Colonic mucosa (tissue), 4 donors: ENCODE measurements at regions of chr6 and their contacts with region 1.

Region 1: GRCh38 chr6:25717866-25718740 is 36.4 kb upstream of the SLC17A4 start:
- DNase-seq: no peak
- H3K4me3 ChIP-seq: no peak overlapping the region
- H3K27ac ChIP-seq: no peak overlapping the region
- H3K4me1 ChIP-seq: no peaks in the 10 kb centered on the region
- H3K27me3 ChIP-seq: no peaks in the 10 kb centered on the region
- CTCF ChIP-seq: peak; percentile 32

Region 2: GRCh38 chr6:24666641-24667377 is 1051.3 kb before region 1 on chr6 and contains the starts of genes ACOT13 and TDP2:
- intact Hi-C with region 1: no loop called
- DNase-seq: peak; percentile 94
- H3K4me3 ChIP-seq: peak within 1 kb of the TSS; percentile 49
- H3K27ac ChIP-seq: peak within 1 kb of the TSS; percentile 98
- H3K4me1 ChIP-seq: peaks cover 13% of the 10 kb centered on the region
- H3K27me3 ChIP-seq: no peaks in the 10 kb centered on the region
- CTCF ChIP-seq: peak; percentile 39
- total RNA-seq, gene ACOT13: 39.6 to 63.6 TPM
- total RNA-seq, gene TDP2: 209 to 408 TPM

Region 3: GRCh38 chr6:25223490-25223991 is 494.6 kb before region 1 on chr6:
- intact Hi-C with region 1: loop called (anchors 5 kb)
- DNase-seq: peak; percentile 81
- H3K4me3 ChIP-seq: no peak overlapping the region
- H3K27ac ChIP-seq: no peak overlapping the region
- H3K4me1 ChIP-seq: no peaks in the 10 kb centered on the region
- H3K27me3 ChIP-seq: no peaks in the 10 kb centered on the region
- CTCF ChIP-seq: peak; percentile 87

Region 4: GRCh38 chr6:25889877-25890853 is 172.1 kb after region 1 on chr6:
- intact Hi-C with region 1: loop called (anchors 5 kb)
- DNase-seq: peak; percentile 57
- H3K4me3 ChIP-seq: no peak overlapping the region
- H3K27ac ChIP-seq: no peak overlapping the region
- H3K4me1 ChIP-seq: no peaks in the 10 kb centered on the region
- H3K27me3 ChIP-seq: no peaks in the 10 kb centered on the region
- CTCF ChIP-seq: peak; percentile 21